Activated CD8-positive, alpha-beta T cell treated with anti-CD3 and anti-CD28 coated beads, Interleukin-2, amount 10 ng/mL, durations not matched to agents 7 days and 5 days (primary cell): ENCODE measurements at regions of chr9 and their contacts with region 1.

Region 1: GRCh38 chr9:130693426-130694191 is at the start of gene EXOSC2:
- DNase-seq: peak; percentile 99
- ATAC-seq: peak; percentile 100
- H3K4me3 Mint-ChIP-seq: peak within 1 kb of the TSS; percentile 96
- H3K27ac Mint-ChIP-seq: peak within 1 kb of the TSS; percentile 93
- H3K4me1 Mint-ChIP-seq: peaks cover 56% of the 10 kb centered on the region
- H3K27me3 Mint-ChIP-seq: peaks cover 7% of the 10 kb centered on the region
- total RNA-seq, gene EXOSC2: 59.6 to 61.6 TPM

Region 2: GRCh38 chr9:130682490-130683121 is 11.0 kb before region 1 on chr9:
- CTCF ChIA-PET with region 1: interaction called, 34 read pairs
- POLR2A ChIA-PET with region 1: interaction called, 6 read pairs
- DNase-seq: peak; percentile 66
- ATAC-seq: no peak
- H3K4me3 Mint-ChIP-seq: peak overlapping the region; percentile 74
- H3K27ac Mint-ChIP-seq: peak overlapping the region; percentile 66
- H3K4me1 Mint-ChIP-seq: peaks cover 6% of the 10 kb centered on the region
- H3K27me3 Mint-ChIP-seq: peaks cover 24% of the 10 kb centered on the region

Region 3: GRCh38 chr9:130707225-130707976 is 13.8 kb after region 1 on chr9:
- CTCF ChIA-PET with region 1: interaction called, 25 read pairs
- POLR2A ChIA-PET with region 1: interaction called, 4 read pairs
- DNase-seq: peak; percentile 80
- ATAC-seq: peak; percentile 57
- H3K4me3 Mint-ChIP-seq: no peak overlapping the region
- H3K27ac Mint-ChIP-seq: no peak overlapping the region
- H3K4me1 Mint-ChIP-seq: peaks cover 5% of the 10 kb centered on the region
- H3K27me3 Mint-ChIP-seq: no peaks in the 10 kb centered on the region

Region 4: GRCh38 chr9:130712564-130713285 is 19.1 kb after region 1 on chr9:
- CTCF ChIA-PET with region 1: interaction called, 25 read pairs
- POLR2A ChIA-PET with region 1: interaction called, 11 read pairs
- DNase-seq: peak; percentile 97
- ATAC-seq: peak; percentile 99
- H3K4me3 Mint-ChIP-seq: peak overlapping the region; percentile 87
- H3K27ac Mint-ChIP-seq: peak overlapping the region; percentile 93
- H3K4me1 Mint-ChIP-seq: peaks cover 38% of the 10 kb centered on the region
- H3K27me3 Mint-ChIP-seq: no peaks in the 10 kb centered on the region